CD4-positive, alpha-beta T cell (primary cell): ENCODE measurements at regions of chr4 and their contacts with region 1.

Region 1: GRCh38 chr4:147096667-147097604 is 151.3 kb upstream of the TTC29 start:
- DNase-seq: peak in 3 of 14 experiments; percentile 55 to 65 (median 58)
- ATAC-seq: no peak
- H3K4me3 ChIP-seq: no peak overlapping the region
- H3K4me3 Mint-ChIP-seq: no peak overlapping the region
- H3K27ac ChIP-seq: no peak overlapping the region
- H3K27ac Mint-ChIP-seq: no peak overlapping the region
- H3K4me1 ChIP-seq: no peaks in the 10 kb centered on the region
- H3K4me1 Mint-ChIP-seq: no peaks in the 10 kb centered on the region
- H3K27me3 ChIP-seq: peaks cover 0 to 4% of the 10 kb centered on the region in 2 experiments
- H3K27me3 Mint-ChIP-seq: peaks cover 40% of the 10 kb centered on the region
- CTCF ChIP-seq: peak; percentile 76

Region 2: DNA sequence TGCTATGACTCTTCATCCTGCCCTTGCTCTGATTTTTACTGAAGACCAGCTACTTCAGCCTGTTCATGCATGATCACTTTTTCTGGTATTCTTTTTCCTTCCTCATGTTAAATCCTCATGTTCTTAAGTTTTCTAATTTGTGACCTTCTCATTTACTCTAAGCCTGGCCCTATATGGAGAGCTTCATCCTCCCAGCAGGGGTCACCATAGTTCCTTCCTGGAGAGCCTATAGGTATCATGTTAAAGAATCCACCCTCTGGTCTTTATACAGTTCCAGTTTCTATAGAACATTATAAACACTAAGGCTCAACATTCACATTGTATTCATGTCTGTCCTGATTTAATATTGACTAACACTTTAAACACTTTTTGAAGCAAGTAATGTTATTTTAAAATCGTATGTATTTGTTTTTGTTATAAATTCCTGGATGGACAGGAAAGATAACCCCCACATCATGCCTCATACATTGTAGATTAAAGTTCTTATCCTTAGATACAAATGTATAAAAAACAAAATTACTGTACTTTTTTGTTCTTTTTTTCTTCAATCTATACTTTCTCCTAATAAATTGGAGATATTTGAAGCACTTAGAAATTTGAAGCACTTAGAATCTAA is 1862.7 kb before region 1 on chr4:
- CTCF ChIA-PET with region 1: no interaction called
- POLR2A ChIA-PET with region 1: no interaction called
- intact Hi-C with region 1: loop called in 1 of 2 experiments (anchors 10 kb)
- DNase-seq: peak in 13 of 14 experiments; percentile 8 to 72 (median 32)
- ATAC-seq: peak; percentile 97
- H3K4me3 ChIP-seq: no peak overlapping the region
- H3K4me3 Mint-ChIP-seq: no peak overlapping the region
- H3K27ac ChIP-seq: no peak overlapping the region
- H3K27ac Mint-ChIP-seq: no peak overlapping the region
- H3K4me1 ChIP-seq: no peaks in the 10 kb centered on the region
- H3K4me1 Mint-ChIP-seq: no peaks in the 10 kb centered on the region
- H3K27me3 ChIP-seq: no peaks in the 10 kb centered on the region
- H3K27me3 Mint-ChIP-seq: peaks cover 5% of the 10 kb centered on the region
- CTCF ChIP-seq: peak; percentile 89

Region 3: DNA sequence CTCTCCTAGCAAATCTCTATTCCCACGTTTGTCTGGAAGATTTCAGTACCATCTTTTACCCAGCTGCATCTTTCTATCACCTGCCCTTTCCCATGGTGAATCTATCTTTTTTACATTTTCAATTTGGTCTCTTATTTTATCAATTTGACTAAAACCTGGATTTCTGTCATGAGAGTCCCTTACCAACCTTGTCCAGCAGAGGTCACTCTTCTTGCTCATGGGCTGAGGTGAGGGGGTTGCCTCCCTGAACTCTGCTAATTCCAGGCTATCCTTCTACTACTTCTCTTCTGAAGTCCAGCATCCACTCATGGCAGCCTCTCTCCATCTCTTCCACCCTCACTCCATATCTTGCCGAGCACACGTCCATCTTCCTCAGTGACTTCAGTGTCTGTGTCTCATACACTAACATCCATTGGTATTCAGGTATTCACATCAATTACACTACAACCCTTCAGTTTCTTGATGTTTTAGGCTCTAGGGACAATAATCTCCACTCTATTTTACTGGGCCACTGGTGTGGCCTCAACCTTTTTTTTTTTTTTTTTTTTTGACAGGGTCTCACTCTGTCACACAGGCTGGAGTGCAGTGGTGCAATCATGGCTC is 1140.5 kb before region 1 on chr4:
- CTCF ChIA-PET with region 1: no interaction called
- POLR2A ChIA-PET with region 1: no interaction called
- intact Hi-C with region 1: loop called (anchors 5 to 10 kb)
- DNase-seq: peak in 10 of 14 experiments; percentile 4 to 69 (median 18)
- ATAC-seq: peak; percentile 68
- H3K4me3 ChIP-seq: no peak overlapping the region
- H3K4me3 Mint-ChIP-seq: no peak overlapping the region
- H3K27ac ChIP-seq: no peak overlapping the region
- H3K27ac Mint-ChIP-seq: no peak overlapping the region
- H3K4me1 ChIP-seq: no peaks in the 10 kb centered on the region
- H3K4me1 Mint-ChIP-seq: no peaks in the 10 kb centered on the region
- H3K27me3 ChIP-seq: no peaks in the 10 kb centered on the region
- H3K27me3 Mint-ChIP-seq: no peaks in the 10 kb centered on the region
- CTCF ChIP-seq: peak; percentile 77

Region 4: DNA sequence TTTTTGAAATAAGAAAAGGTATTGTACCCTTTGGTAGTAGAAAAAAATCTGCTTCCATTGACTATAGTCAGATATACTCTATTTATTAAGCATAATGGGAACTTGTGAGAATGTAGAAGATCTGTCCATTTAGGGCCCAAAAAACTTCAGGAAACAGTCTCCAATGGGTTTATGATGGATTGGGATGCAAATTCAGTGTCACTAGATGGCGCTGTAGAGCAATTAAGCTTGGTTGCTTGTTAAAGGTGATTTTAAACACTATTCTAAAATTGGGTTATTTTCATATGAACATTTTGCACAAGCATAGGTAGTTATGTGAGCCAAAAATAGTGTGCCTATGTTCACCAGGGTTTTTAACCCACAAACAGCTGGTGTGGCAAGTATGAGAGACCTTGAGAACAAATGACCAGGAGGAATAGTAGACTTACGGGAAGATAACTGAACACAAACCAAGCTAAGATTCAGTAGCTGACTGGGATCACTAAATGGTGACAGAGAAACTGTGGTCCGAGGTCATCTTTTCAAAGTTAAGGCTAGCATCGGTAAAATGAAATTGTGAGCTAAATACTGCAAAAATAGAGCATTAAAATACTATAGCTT is 1001.7 kb before region 1 on chr4:
- CTCF ChIA-PET with region 1: no interaction called
- POLR2A ChIA-PET with region 1: no interaction called
- intact Hi-C with region 1: loop called in 1 of 2 experiments (anchors 5 kb)
- DNase-seq: peak in 4 of 14 experiments; percentile 15 to 51 (median 28)
- ATAC-seq: no peak
- H3K4me3 ChIP-seq: no peak overlapping the region
- H3K4me3 Mint-ChIP-seq: no peak overlapping the region
- H3K27ac ChIP-seq: no peak overlapping the region
- H3K27ac Mint-ChIP-seq: no peak overlapping the region
- H3K4me1 ChIP-seq: no peaks in the 10 kb centered on the region
- H3K4me1 Mint-ChIP-seq: no peaks in the 10 kb centered on the region
- H3K27me3 ChIP-seq: peaks cover 0 to 5% of the 10 kb centered on the region in 2 experiments
- H3K27me3 Mint-ChIP-seq: peaks cover 5% of the 10 kb centered on the region
- CTCF ChIP-seq: peak; percentile 53

Region 5: DNA sequence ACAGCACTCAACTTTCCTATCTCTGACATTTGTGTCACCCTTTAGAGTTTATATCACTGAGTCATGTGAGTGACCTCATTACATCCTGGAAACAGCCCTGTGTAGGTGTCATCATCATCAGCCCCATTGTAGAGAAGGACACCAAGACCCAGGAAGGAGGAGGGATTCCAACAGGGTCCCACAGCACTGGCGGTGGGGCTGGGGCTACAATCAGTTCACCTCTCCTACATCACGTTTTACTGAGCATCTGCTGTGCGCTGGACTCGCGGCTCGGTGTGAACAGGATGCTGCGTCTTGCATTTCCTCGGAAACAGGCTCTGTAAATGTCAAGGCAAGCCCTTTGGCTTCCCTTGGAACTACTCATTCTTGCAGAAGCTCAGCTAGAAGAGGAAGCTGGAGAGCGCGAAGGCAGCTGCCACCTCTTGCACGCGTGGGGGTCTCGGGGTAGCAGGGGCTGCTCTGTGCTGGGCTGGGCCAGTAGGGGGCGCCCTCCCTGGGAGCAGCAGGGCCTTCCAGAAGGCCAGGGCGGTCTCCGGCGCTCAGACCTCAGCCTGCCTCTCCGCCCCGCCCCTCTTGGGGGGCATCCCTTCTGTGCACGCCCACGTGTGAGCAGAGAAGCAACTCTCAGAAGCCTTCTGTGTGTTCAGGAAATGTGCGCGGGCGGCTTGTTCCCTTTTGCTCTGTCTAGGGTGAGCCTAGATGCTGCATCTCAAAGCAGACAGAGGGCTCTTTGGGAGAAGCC is 853.6 kb before region 1 on chr4:
- CTCF ChIA-PET with region 1: no interaction called
- POLR2A ChIA-PET with region 1: no interaction called
- intact Hi-C with region 1: loop called (anchors 2 kb)
- DNase-seq: peak in 11 of 14 experiments; percentile 13 to 60 (median 29)
- ATAC-seq: peak; percentile 66
- H3K4me3 ChIP-seq: peak overlapping the region; percentile 18
- H3K4me3 Mint-ChIP-seq: peak overlapping the region; percentile 56
- H3K27ac ChIP-seq: no peak overlapping the region
- H3K27ac Mint-ChIP-seq: no peak overlapping the region
- H3K4me1 ChIP-seq: peaks cover 14% of the 10 kb centered on the region
- H3K4me1 Mint-ChIP-seq: peaks cover 20% of the 10 kb centered on the region
- H3K27me3 ChIP-seq: no peaks in the 10 kb centered on the region
- H3K27me3 Mint-ChIP-seq: peaks cover 10% of the 10 kb centered on the region
- CTCF ChIP-seq: peak; percentile 49

Region 6: GRCh38 chr4:146342600-146343192 is 754.2 kb before region 1 on chr4:
- CTCF ChIA-PET with region 1: no interaction called
- POLR2A ChIA-PET with region 1: no interaction called
- intact Hi-C with region 1: loop called in 1 of 2 experiments (anchors 2 kb)
- DNase-seq: peak in 8 of 14 experiments; percentile 0 to 59 (median 24)
- ATAC-seq: no peak
- H3K4me3 ChIP-seq: no peak overlapping the region
- H3K4me3 Mint-ChIP-seq: no peak overlapping the region
- H3K27ac ChIP-seq: no peak overlapping the region
- H3K27ac Mint-ChIP-seq: no peak overlapping the region
- H3K4me1 ChIP-seq: no peaks in the 10 kb centered on the region
- H3K4me1 Mint-ChIP-seq: peaks cover 5% of the 10 kb centered on the region
- H3K27me3 ChIP-seq: no peaks in the 10 kb centered on the region
- H3K27me3 Mint-ChIP-seq: no peaks in the 10 kb centered on the region
- CTCF ChIP-seq: peak; percentile 73

Region 7: GRCh38 chr4:146790515-146790914 is 306.4 kb before region 1 on chr4:
- CTCF ChIA-PET with region 1: no interaction called
- POLR2A ChIA-PET with region 1: no interaction called
- intact Hi-C with region 1: no loop called
- DNase-seq: no peak
- ATAC-seq: no peak
- H3K4me3 ChIP-seq: no peak overlapping the region
- H3K4me3 Mint-ChIP-seq: no peak overlapping the region
- H3K27ac ChIP-seq: no peak overlapping the region
- H3K27ac Mint-ChIP-seq: no peak overlapping the region
- H3K4me1 ChIP-seq: no peaks in the 10 kb centered on the region
- H3K4me1 Mint-ChIP-seq: no peaks in the 10 kb centered on the region
- H3K27me3 ChIP-seq: no peaks in the 10 kb centered on the region
- H3K27me3 Mint-ChIP-seq: peaks cover 4% of the 10 kb centered on the region
- CTCF ChIP-seq: no peak

Region 8: DNA sequence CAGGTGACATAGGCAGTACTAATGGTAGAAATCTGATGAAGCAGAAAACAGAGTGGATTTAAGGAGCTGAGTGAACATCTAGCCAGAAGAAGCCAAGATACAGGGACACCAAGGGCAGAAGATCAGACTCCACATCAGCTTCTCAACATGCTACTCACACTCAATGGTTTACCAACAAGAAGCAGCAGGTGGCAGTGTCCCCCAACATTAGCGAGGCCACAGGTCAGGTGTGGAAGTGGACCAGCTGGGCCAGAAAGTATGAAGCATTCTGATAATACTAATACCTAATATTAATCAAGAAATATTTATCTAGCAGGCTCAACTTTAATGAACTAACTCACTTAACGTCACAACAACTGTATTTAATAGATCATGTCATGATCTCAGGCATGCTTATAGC is 77.9 kb before region 1 on chr4:
- CTCF ChIA-PET with region 1: interaction called, 17 read pairs
- POLR2A ChIA-PET with region 1: no interaction called
- intact Hi-C with region 1: loop called (anchors 1 to 5 kb)
- DNase-seq: peak; percentile 6 to 63 (median 32)
- ATAC-seq: no peak
- H3K4me3 ChIP-seq: no peak overlapping the region
- H3K4me3 Mint-ChIP-seq: no peak overlapping the region
- H3K27ac ChIP-seq: no peak overlapping the region
- H3K27ac Mint-ChIP-seq: no peak overlapping the region
- H3K4me1 ChIP-seq: no peaks in the 10 kb centered on the region
- H3K4me1 Mint-ChIP-seq: no peaks in the 10 kb centered on the region
- H3K27me3 ChIP-seq: no peaks in the 10 kb centered on the region
- H3K27me3 Mint-ChIP-seq: peaks cover 5% of the 10 kb centered on the region
- CTCF ChIP-seq: peak; percentile 46